ENCODE measurements at regions of chr9 and their contacts with region 1.

Region 1: GRCh38 chr9:114906908-114907571 is 23.4 kb downstream of the TNFSF8 start:
- DNase-seq: peak; percentile 58
- ATAC-seq: peak; percentile 16
- H3K4me3 ChIP-seq: no peak overlapping the region
- H3K27ac ChIP-seq: peak overlapping the region; percentile 91
- H3K4me1 ChIP-seq: peaks cover 45% of the 10 kb centered on the region
- H3K27me3 ChIP-seq: no peaks in the 10 kb centered on the region
- CTCF ChIP-seq: peak; percentile 80

Region 2: GRCh38 chr9:114611516-114612271 is 295.3 kb before region 1 on chr9:
- CTCF ChIA-PET with region 1: no interaction called
- POLR2A ChIA-PET with region 1: no interaction called
- intact Hi-C with region 1: no loop called
- DNase-seq: peak; percentile 34
- ATAC-seq: peak; percentile 79
- H3K4me3 ChIP-seq: peak overlapping the region; percentile 87
- H3K27ac ChIP-seq: peak overlapping the region; percentile 56
- H3K4me1 ChIP-seq: peaks cover 22% of the 10 kb centered on the region; the same call in 1 of the 2 replicates
- H3K27me3 ChIP-seq: no peaks in the 10 kb centered on the region
- CTCF ChIP-seq: no peak

Region 3: DNA sequence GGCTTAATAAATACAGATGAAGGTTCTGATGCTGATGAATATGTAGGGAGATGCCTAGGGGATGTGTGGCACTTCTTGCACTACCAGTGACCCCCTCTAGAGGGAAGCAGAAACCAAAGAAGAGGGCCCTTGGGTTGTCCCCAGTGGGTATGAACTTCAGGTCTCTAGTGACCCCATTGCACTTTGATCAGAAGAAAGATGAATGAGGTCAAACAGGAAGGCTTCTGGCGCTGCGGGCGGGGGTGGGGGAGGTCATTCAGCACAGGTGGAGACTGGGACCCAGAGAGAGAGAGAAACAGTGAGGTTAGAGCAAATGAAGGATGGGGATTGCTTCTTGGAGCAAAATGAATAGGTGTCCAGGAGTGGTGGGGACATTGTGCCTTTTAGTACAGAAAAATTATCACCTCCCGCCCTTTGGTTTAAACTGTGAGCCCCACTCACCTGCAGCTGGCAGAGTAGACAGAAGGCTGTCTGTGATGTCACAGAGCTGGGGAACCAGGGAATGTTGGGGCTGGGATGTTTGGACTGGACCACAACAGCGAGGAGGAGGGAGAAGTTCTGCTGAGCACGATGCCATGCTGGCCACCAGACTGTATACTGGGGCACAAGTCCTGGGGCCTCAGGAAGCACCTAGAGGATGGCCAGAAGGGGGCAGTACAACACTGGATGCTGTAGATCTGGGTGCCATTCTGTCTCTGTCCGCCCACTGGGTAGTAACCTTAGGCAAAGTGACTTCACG is 225.3 kb before region 1 on chr9 and contains the start of gene TEX48:
- CTCF ChIA-PET with region 1: interaction called, 3 read pairs
- POLR2A ChIA-PET with region 1: no interaction called
- intact Hi-C with region 1: loop called (anchors 1 kb)
- DNase-seq: peak; percentile 82
- ATAC-seq: peak; percentile 75
- H3K4me3 ChIP-seq: no peak within 1 kb of the TSS
- H3K27ac ChIP-seq: peak within 1 kb of the TSS; percentile 71
- H3K4me1 ChIP-seq: peaks cover 40% of the 10 kb centered on the region
- H3K27me3 ChIP-seq: no peaks in the 10 kb centered on the region
- CTCF ChIP-seq: peak; percentile 65
- total RNA-seq, gene TEX48: 2.4 TPM in 1 of 2 replicates, not detected in the other

Region 4: DNA sequence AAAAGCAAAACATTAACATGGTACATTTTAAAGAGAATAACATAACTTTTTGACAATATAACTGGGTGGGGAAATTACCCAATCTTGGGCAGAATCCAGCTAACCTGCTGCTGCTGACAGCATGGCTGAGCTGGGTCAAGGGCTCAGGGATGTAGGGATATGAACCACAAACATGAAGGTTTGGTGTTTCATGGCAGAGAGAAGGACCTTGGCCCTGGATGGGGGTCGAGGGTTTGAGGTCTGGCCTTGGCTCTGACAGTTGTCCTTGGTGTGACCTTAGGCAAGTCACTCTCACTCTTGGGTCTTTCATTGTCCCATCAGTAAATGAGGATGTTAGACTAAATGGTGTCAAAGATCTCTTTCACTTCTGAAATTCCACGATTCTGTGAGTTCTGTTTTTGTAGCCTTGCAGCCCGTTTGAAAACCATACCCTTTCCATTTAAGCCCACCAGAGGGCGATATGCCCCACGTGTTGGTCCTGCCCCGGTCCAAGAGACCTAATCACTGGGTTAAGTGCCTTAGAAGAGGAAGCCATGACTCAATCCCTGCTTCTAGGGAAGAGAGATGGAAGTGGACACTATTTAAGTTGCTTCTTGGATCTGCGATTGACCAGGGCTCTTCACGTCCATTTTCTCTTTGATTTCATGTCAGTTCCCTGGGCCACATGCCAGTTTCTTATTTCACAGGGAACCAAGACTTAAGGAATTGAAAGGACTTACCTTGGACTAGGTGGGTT is 168.3 kb before region 1 on chr9:
- CTCF ChIA-PET with region 1: interaction called, 12 read pairs
- POLR2A ChIA-PET with region 1: interaction called, 3 read pairs
- intact Hi-C with region 1: loop called (anchors 1 kb)
- DNase-seq: peak; percentile 80
- ATAC-seq: peak; percentile 52
- H3K4me3 ChIP-seq: no peak overlapping the region
- H3K27ac ChIP-seq: peak overlapping the region; percentile 63
- H3K4me1 ChIP-seq: peaks cover 33% of the 10 kb centered on the region
- H3K27me3 ChIP-seq: no peaks in the 10 kb centered on the region
- CTCF ChIP-seq: peak; percentile 87

Region 5: DNA sequence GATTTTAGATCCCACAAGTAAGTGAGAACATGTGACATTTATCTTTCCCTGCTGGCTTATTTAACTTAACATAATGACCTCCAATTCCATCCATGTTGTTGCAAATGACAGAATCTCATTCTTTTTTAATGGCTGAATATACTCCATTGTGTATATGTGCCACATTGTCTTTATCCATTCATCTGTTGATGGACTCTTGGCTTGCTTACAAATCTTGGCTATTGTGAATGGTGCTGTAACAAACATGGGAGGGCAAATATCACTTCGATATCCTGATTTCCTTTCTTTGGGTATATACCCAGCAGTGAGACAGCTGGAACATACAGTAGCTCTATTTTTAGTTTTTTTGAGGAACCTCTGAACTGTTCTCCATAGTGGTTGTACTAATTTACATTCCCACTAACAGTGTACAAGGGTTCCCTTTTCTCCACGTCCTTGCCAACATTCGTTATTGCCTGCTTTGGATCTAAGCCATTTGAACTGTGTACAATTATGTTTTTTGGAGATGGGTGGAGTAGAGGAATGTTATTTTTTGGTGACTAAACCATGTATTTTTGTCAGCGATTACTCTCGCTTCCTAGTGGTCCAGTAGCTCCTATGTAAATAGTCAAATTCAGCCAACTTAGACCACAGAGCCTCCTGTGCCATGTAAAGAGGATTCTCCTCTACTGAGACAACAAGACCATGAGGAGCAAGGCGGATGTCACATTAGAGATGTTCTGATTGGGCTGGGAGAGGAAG is 161.8 kb before region 1 on chr9:
- CTCF ChIA-PET with region 1: no interaction called
- POLR2A ChIA-PET with region 1: no interaction called
- intact Hi-C with region 1: loop called (anchors 1 kb)
- DNase-seq: peak; percentile 83
- ATAC-seq: peak; percentile 83
- H3K4me3 ChIP-seq: no peak overlapping the region
- H3K27ac ChIP-seq: peak overlapping the region; percentile 50
- H3K4me1 ChIP-seq: peaks cover 25% of the 10 kb centered on the region
- H3K27me3 ChIP-seq: no peaks in the 10 kb centered on the region
- CTCF ChIP-seq: no peak

Region 6: DNA sequence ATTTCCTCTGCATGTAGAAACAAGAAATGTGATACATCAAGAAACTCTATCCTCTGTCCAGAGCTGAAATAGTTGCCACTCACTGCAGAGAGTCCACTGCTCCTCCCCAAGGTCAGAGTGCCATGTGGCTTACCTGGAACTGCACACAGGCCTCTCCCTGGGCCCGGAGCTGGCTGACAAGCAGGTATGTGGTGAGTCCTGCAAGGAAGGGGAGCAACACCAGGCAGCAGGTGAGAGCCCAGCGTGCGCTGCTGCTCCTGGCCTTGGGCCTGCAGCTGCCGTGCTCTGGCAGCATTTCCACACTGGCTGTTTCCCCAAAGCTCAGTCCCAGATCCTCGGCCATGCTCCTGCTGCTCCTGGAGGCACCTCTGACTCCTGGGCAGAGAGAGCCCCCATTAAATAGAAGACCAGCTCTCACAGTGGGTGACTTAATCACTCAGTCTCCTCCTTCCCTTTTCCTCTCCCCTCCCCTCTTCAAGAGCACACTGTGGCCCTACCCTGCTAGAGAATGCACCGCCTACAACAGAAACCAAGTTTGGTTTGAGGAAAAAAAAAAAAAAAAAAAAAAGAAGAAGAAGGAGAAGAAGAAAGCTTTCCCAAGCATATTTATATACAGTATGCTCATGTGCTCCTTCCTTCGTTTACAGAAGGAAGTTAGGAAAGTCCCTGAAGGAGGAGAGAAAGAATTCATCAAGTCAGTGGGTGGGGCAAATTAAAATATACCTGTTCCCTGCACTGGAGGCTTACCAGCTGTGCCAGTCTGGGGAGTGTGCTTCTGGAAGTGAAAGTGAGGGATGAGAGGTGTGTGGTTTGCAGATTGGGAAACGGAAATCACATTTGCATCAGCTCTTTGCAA is 101.1 kb before region 1 on chr9 and contains the start of gene TNFSF15:
- CTCF ChIA-PET with region 1: no interaction called
- POLR2A ChIA-PET with region 1: no interaction called
- intact Hi-C with region 1: loop called (anchors 1 kb)
- DNase-seq: peak; percentile 43
- ATAC-seq: peak; percentile 64
- H3K4me3 ChIP-seq: peak within 1 kb of the TSS; percentile 47; the same call in 1 of the 2 replicates
- H3K27ac ChIP-seq: peak within 1 kb of the TSS; percentile 62
- H3K4me1 ChIP-seq: peaks cover 37% of the 10 kb centered on the region
- H3K27me3 ChIP-seq: no peaks in the 10 kb centered on the region
- CTCF ChIP-seq: no peak
- total RNA-seq, gene TNFSF15: 1.7 and 2.2 TPM in 2 replicates

Region 7: DNA sequence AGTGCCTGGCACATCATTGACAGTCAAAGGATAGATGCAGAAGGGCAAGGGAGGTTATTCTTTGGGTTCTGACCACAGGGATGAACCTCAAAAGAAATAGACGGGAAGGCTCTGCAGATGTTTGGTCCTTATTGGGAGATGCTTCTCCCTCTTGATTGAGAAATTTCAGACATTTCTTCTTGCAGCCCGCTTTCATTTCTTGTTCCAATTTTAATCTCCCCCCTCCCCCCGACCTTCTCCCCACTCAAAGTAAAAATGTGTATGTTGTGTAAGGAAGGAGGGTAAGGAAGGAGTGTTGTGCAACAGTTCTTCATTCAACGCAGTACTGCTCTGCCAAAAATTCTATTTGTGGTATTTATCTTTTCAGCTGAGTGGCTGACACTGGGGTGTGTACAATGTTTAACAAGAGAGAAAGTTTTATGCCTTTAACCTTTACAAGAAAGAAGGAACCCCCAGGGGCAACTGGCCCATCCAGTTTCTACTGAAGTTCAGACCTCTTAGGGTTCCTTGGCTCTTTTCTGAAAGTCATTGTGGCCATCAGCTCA is 54.9 kb before region 1 on chr9:
- CTCF ChIA-PET with region 1: no interaction called
- POLR2A ChIA-PET with region 1: no interaction called
- intact Hi-C with region 1: loop called (anchors 2 kb)
- DNase-seq: peak; percentile 78
- ATAC-seq: peak; percentile 61
- H3K4me3 ChIP-seq: no peak overlapping the region
- H3K27ac ChIP-seq: peak overlapping the region; percentile 65
- H3K4me1 ChIP-seq: peaks cover 35% of the 10 kb centered on the region
- H3K27me3 ChIP-seq: no peaks in the 10 kb centered on the region
- CTCF ChIP-seq: no peak

Region 8: GRCh38 chr9:114953917-114954316 is 46.9 kb after region 1 on chr9:
- CTCF ChIA-PET with region 1: no interaction called
- POLR2A ChIA-PET with region 1: no interaction called
- intact Hi-C with region 1: no loop called
- DNase-seq: peak; percentile 83
- ATAC-seq: peak; percentile 64
- H3K4me3 ChIP-seq: no peak overlapping the region
- H3K27ac ChIP-seq: peak overlapping the region; percentile 44
- H3K4me1 ChIP-seq: peaks cover 12% of the 10 kb centered on the region
- H3K27me3 ChIP-seq: no peaks in the 10 kb centered on the region
- CTCF ChIP-seq: no peak

Measured in PC-3 (cell line).